Endothelial cell of umbilical vein (primary cell): ENCODE measurements at regions of chr5 and their contacts with region 1.

Region 1: GRCh38 chr5:38994324-38994927 is 79.8 kb downstream of the RICTOR start:
- DNase-seq: peak; percentile 76
- H3K4me3 ChIP-seq: no peak overlapping the region
- H3K27ac ChIP-seq: no peak overlapping the region
- H3K4me1 ChIP-seq: no peaks in the 10 kb centered on the region
- H3K27me3 ChIP-seq: no peaks in the 10 kb centered on the region
- CTCF ChIP-seq: peak; percentile 33 to 50
- POLR2A ChIP-seq: no peak

Region 2: GRCh38 chr5:38979535-38979934 is 14.9 kb before region 1 on chr5:
- CTCF ChIA-PET with region 1: no interaction called
- POLR2A ChIA-PET with region 1: no interaction called
- dilution Hi-C with region 1: no loop called
- intact Hi-C with region 1: no loop called
- DNase-seq: no peak
- H3K4me3 ChIP-seq: no peak overlapping the region
- H3K27ac ChIP-seq: no peak overlapping the region
- H3K4me1 ChIP-seq: no peaks in the 10 kb centered on the region
- H3K27me3 ChIP-seq: no peaks in the 10 kb centered on the region
- CTCF ChIP-seq: no peak
- POLR2A ChIP-seq: no peak

Region 3: GRCh38 chr5:39570403-39571027 is 576.1 kb after region 1 on chr5:
- CTCF ChIA-PET with region 1: no interaction called
- POLR2A ChIA-PET with region 1: no interaction called
- dilution Hi-C with region 1: no loop called
- intact Hi-C with region 1: loop called (anchors 10 kb)
- DNase-seq: peak; percentile 61
- H3K4me3 ChIP-seq: no peak overlapping the region
- H3K27ac ChIP-seq: no peak overlapping the region
- H3K4me1 ChIP-seq: peaks cover 4% of the 10 kb centered on the region
- H3K27me3 ChIP-seq: no peaks in the 10 kb centered on the region
- CTCF ChIP-seq: peak; percentile 35 to 37
- POLR2A ChIP-seq: no peak